Naive thymus-derived CD4-positive, alpha-beta T cell (primary cell): ENCODE measurements at regions of chr2 and their contacts with region 1.

Region 1: GRCh38 chr2:161344692-161345091 is 36.5 kb downstream of the PSMD14 start:
- DNase-seq: no peak
- ATAC-seq: no peak
- H3K4me3 ChIP-seq: no peak overlapping the region
- H3K4me3 Mint-ChIP-seq: no peak overlapping the region
- H3K27ac ChIP-seq: no peak overlapping the region
- H3K27ac Mint-ChIP-seq: no peak overlapping the region
- H3K4me1 ChIP-seq: no peaks in the 10 kb centered on the region
- H3K4me1 Mint-ChIP-seq: peaks cover 14 to 32% (median 25%) of the 10 kb centered on the region in 7 donors
- H3K27me3 ChIP-seq: no peaks in the 10 kb centered on the region
- H3K27me3 Mint-ChIP-seq: no peaks in the 10 kb centered on the region

Region 2: GRCh38 chr2:161373942-161374341 is 29.2 kb after region 1 on chr2:
- CTCF ChIA-PET with region 1: no interaction called
- POLR2A ChIA-PET with region 1: no interaction called
- intact Hi-C with region 1: no loop called
- DNase-seq: no peak
- ATAC-seq: no peak
- H3K4me3 ChIP-seq: no peak overlapping the region
- H3K4me3 Mint-ChIP-seq: no peak overlapping the region
- H3K27ac ChIP-seq: no peak overlapping the region
- H3K27ac Mint-ChIP-seq: no peak overlapping the region
- H3K4me1 ChIP-seq: no peaks in the 10 kb centered on the region
- H3K4me1 Mint-ChIP-seq: no peaks in the 10 kb centered on the region
- H3K27me3 ChIP-seq: no peaks in the 10 kb centered on the region
- H3K27me3 Mint-ChIP-seq: no peaks in the 10 kb centered on the region

Region 3: GRCh38 chr2:161384864-161385263 is 40.2 kb after region 1 on chr2:
- CTCF ChIA-PET with region 1: no interaction called
- POLR2A ChIA-PET with region 1: interaction called, 8 read pairs
- intact Hi-C with region 1: loop called in 1 of 2 experiments (anchors 5 kb)
- DNase-seq: peak in 6 of 9 donors; percentile 8 to 49 (median 36)
- ATAC-seq: peak; percentile 78
- H3K4me3 ChIP-seq: no peak overlapping the region
- H3K4me3 Mint-ChIP-seq: peak overlapping the region in 2 of 10 donors; percentile 30 to 49
- H3K27ac ChIP-seq: no peak overlapping the region
- H3K27ac Mint-ChIP-seq: peak overlapping the region in 3 of 9 donors; percentile 30 to 41 (median 37)
- H3K4me1 ChIP-seq: peaks cover 8% of the 10 kb centered on the region in 2 donors
- H3K4me1 Mint-ChIP-seq: peaks cover 0 to 30% (median 13%) of the 10 kb centered on the region in 7 donors
- H3K27me3 ChIP-seq: no peaks in the 10 kb centered on the region
- H3K27me3 Mint-ChIP-seq: no peaks in the 10 kb centered on the region